ENCODE measurements at regions of chr9 and their contacts with region 1.

Region 1: DNA sequence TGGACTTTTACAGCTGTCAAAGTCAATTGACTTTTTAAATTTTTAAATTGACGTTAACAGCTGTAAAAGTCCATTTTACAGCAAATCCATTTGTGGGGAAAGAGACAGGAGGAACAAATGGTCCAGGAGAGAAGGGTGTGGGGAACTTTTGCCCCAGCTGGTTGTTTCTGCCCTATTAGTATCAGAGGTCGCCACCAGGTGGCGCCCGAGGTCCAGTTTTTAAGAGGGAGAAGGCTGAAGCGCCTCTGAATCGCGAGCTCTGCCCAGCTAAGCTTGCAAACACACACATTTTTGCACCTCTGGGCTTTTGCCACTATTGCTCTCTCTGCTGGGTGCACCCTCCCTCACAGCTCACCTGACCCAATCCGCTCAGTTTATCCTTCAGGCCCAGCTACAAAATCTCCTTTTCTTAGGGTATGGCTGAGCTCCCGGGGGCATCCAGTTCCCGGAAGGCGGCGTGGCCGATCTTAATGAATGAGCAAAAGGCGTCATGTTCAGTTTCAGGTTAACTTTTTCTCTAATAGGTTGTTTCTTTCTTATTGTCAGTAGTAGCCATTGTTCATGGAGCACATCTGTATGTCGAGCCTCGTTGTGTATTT is 6.3 kb upstream of the TTLL11 start:
- DNase-seq: peak; percentile 81
- H3K4me3 ChIP-seq: no peak overlapping the region
- H3K27ac ChIP-seq: no peak overlapping the region
- H3K4me1 ChIP-seq: no peaks in the 10 kb centered on the region
- H3K27me3 ChIP-seq: no peaks in the 10 kb centered on the region
- CTCF ChIP-seq: peak; percentile 83

Region 2: DNA sequence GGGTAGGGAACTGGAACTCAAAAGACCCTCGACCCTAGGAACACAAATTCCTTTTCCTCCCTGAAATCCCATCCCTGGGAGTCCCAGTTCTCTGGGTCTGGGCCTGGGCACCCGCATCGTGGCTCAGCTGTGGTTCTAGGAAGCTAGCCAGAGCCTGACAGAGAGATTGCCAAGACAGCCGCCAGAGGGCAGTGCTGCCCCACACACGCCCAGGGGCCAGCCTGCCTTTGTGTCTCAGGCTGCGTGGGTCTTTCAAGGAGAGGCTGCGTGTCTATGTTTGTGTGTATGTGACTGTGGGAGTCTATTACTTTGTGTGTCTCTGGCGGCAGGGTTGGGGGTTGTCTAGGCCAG is 25.8 kb after region 1 on chr9:
- CTCF ChIA-PET with region 1: interaction called, 42 read pairs
- POLR2A ChIA-PET with region 1: no interaction called
- intact Hi-C with region 1: loop called (anchors 2 kb)
- DNase-seq: peak; percentile 79
- H3K4me3 ChIP-seq: no peak overlapping the region
- H3K27ac ChIP-seq: no peak overlapping the region
- H3K4me1 ChIP-seq: peaks cover 11% of the 10 kb centered on the region
- H3K27me3 ChIP-seq: peaks cover 11% of the 10 kb centered on the region
- CTCF ChIP-seq: peak; percentile 92

Region 3: GRCh38 chr9:122135529-122135859 is 36.1 kb after region 1 on chr9:
- CTCF ChIA-PET with region 1: no interaction called
- POLR2A ChIA-PET with region 1: no interaction called
- intact Hi-C with region 1: no loop called
- DNase-seq: no peak
- H3K4me3 ChIP-seq: no peak overlapping the region
- H3K27ac ChIP-seq: no peak overlapping the region
- H3K4me1 ChIP-seq: peaks cover 5% of the 10 kb centered on the region
- H3K27me3 ChIP-seq: no peaks in the 10 kb centered on the region
- CTCF ChIP-seq: no peak

Region 4: GRCh38 chr9:122350638-122351355 is 251.4 kb after region 1 on chr9:
- CTCF ChIA-PET with region 1: interaction called, 40 read pairs
- POLR2A ChIA-PET with region 1: no interaction called
- intact Hi-C with region 1: loop called (anchors 1 kb)
- DNase-seq: peak; percentile 75
- H3K4me3 ChIP-seq: no peak overlapping the region
- H3K27ac ChIP-seq: no peak overlapping the region
- H3K4me1 ChIP-seq: no peaks in the 10 kb centered on the region
- H3K27me3 ChIP-seq: peaks cover 43% of the 10 kb centered on the region
- CTCF ChIP-seq: peak; percentile 96

Region 5: GRCh38 chr9:122453677-122454135 is 354.3 kb after region 1 on chr9:
- CTCF ChIA-PET with region 1: interaction called, 6 read pairs
- POLR2A ChIA-PET with region 1: no interaction called
- intact Hi-C with region 1: loop called (anchors 1 kb)
- DNase-seq: no peak
- H3K4me3 ChIP-seq: no peak overlapping the region
- H3K27ac ChIP-seq: no peak overlapping the region
- H3K4me1 ChIP-seq: no peaks in the 10 kb centered on the region
- H3K27me3 ChIP-seq: peaks cover 16% of the 10 kb centered on the region
- CTCF ChIP-seq: no peak

Region 6: GRCh38 chr9:122810306-122810946 is 711.1 kb after region 1 on chr9:
- CTCF ChIA-PET with region 1: interaction called, 3 read pairs
- POLR2A ChIA-PET with region 1: no interaction called
- intact Hi-C with region 1: loop called (anchors 1 kb)
- DNase-seq: peak; percentile 86
- H3K4me3 ChIP-seq: no peak overlapping the region
- H3K27ac ChIP-seq: no peak overlapping the region
- H3K4me1 ChIP-seq: no peaks in the 10 kb centered on the region
- H3K27me3 ChIP-seq: no peaks in the 10 kb centered on the region
- CTCF ChIP-seq: peak; percentile 82

Region 7: GRCh38 chr9:122949696-122950095 is 850.3 kb after region 1 on chr9:
- CTCF ChIA-PET with region 1: no interaction called
- POLR2A ChIA-PET with region 1: interaction called, 14 read pairs
- intact Hi-C with region 1: no loop called
- DNase-seq: no peak
- H3K4me3 ChIP-seq: no peak overlapping the region
- H3K27ac ChIP-seq: no peak overlapping the region
- H3K4me1 ChIP-seq: peaks cover 37% of the 10 kb centered on the region
- H3K27me3 ChIP-seq: no peaks in the 10 kb centered on the region
- CTCF ChIP-seq: no peak

Measured in A673 (cell line).